CD14-positive monocyte (primary cell): ENCODE measurements at regions of chr17 and their contacts with region 1.

Region 1: GRCh38 chr17:2592971-2593820 is at the start of gene PAFAH1B1:
- DNase-seq: peak; percentile 79 to 95 (median 89)
- H3K4me3 ChIP-seq: peak within 1 kb of the TSS; percentile 92 to 98 (median 97)
- H3K4me3 Mint-ChIP-seq: peak within 1 kb of the TSS; percentile 91 to 94
- H3K27ac ChIP-seq: peak within 1 kb of the TSS; percentile 95 to 97
- H3K27ac Mint-ChIP-seq: peak within 1 kb of the TSS; percentile 84 to 98 (median 96)
- H3K4me1 ChIP-seq: peaks cover 25 to 36% of the 10 kb centered on the region in 2 donors
- H3K4me1 Mint-ChIP-seq: peaks cover 36% of the 10 kb centered on the region
- H3K27me3 ChIP-seq: no peaks in the 10 kb centered on the region
- H3K27me3 Mint-ChIP-seq: peaks cover 0 to 4% (median 3%) of the 10 kb centered on the region in 3 donors
- CTCF ChIP-seq: no peak
- polyA plus RNA-seq, gene PAFAH1B1: 9.1 to 51.8 (median 17.1) TPM

Region 2: DNA sequence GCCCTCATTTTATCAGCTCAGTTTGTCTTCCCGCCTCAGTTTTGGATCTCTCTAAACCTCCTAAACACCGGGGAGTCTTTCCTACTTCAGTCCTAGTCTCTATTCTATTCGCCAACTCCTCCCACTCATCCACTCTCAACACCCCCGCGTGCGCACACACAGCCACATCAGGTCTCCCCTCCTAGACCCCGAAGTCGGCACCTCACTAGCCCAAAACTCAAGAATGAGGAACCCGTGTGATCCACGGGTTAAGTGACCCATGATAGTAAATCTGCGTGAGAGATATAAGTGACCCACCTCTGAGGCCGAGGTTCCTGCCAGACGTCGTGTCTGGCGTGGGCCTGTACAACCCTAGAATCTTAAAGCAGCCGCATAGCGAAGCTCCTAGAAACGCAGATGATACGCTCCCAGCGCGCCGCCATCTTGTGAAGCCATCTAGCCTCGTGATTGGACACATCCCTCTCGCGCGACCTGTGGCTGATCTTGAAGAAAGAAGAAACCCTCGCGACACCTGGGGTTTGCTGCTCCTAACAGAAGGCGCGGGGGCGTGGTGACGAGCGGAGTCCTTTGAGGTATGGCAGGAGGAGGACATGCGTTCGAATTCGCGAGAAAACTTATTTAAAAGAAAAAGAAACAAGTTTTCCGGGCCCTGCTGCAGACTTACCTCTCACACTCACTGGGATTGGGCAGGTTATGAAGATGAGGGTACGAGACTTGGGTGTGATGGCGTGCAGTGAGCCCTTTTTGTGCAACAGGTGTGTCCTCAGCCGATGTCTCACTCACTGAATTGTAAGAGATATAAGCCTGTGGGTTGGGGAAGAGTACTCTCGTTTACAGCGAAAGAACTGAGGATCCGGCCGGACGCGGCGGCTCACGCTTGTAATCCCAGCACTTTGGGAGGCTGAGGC is 81.5 kb before region 1 on chr17 and contains the start of gene METTL16:
- intact Hi-C with region 1: loop called in 1 of 2 experiments (anchors 5 kb)
- DNase-seq: peak; percentile 94 to 98 (median 96)
- H3K4me3 ChIP-seq: peak within 1 kb of the TSS; percentile 70 to 88 (median 85)
- H3K4me3 Mint-ChIP-seq: peak within 1 kb of the TSS in 1 of 2 donors; percentile 26
- H3K27ac ChIP-seq: peak within 1 kb of the TSS; percentile 94 to 96
- H3K27ac Mint-ChIP-seq: no peak within 1 kb of the TSS
- H3K4me1 ChIP-seq: peaks cover 16 to 22% of the 10 kb centered on the region in 2 donors
- H3K4me1 Mint-ChIP-seq: peaks cover 9% of the 10 kb centered on the region
- H3K27me3 ChIP-seq: no peaks in the 10 kb centered on the region
- H3K27me3 Mint-ChIP-seq: peaks cover 0 to 1% (median 0%) of the 10 kb centered on the region in 3 donors
- CTCF ChIP-seq: no peak
- polyA plus RNA-seq, gene METTL16: 3.0 to 8.0 (median 4.7) TPM

Region 3: GRCh38 chr17:2672026-2672425 is 78.8 kb after region 1 on chr17:
- intact Hi-C with region 1: loop called in 1 of 2 experiments (anchors 2 kb)
- DNase-seq: no peak
- H3K4me3 ChIP-seq: no peak overlapping the region
- H3K4me3 Mint-ChIP-seq: no peak overlapping the region
- H3K27ac ChIP-seq: no peak overlapping the region
- H3K27ac Mint-ChIP-seq: no peak overlapping the region
- H3K4me1 ChIP-seq: no peaks in the 10 kb centered on the region
- H3K4me1 Mint-ChIP-seq: no peaks in the 10 kb centered on the region
- H3K27me3 ChIP-seq: no peaks in the 10 kb centered on the region
- H3K27me3 Mint-ChIP-seq: peaks cover 0 to 2% (median 0%) of the 10 kb centered on the region in 3 donors
- CTCF ChIP-seq: no peak